CD4-positive, alpha-beta T cell (primary cell): ENCODE measurements at regions of chr9 and their contacts with region 1.

Region 1: GRCh38 chr9:127715394-127716337 is at the starts of genes PTRH1 and TTC16:
- DNase-seq: peak; percentile 92 to 98 (median 96)
- ATAC-seq: peak; percentile 94
- H3K4me3 ChIP-seq: peak within 1 kb of the TSS; percentile 73
- H3K4me3 Mint-ChIP-seq: peak within 1 kb of the TSS; percentile 92
- H3K27ac ChIP-seq: peak within 1 kb of the TSS; percentile 51 to 76
- H3K27ac Mint-ChIP-seq: peak within 1 kb of the TSS; percentile 83
- H3K4me1 ChIP-seq: peaks cover 59% of the 10 kb centered on the region
- H3K4me1 Mint-ChIP-seq: peaks cover 30% of the 10 kb centered on the region
- H3K27me3 ChIP-seq: no peaks in the 10 kb centered on the region
- H3K27me3 Mint-ChIP-seq: no peaks in the 10 kb centered on the region
- CTCF ChIP-seq: no peak
- total RNA-seq, gene PTRH1: 4.5 to 5.9 TPM
- total RNA-seq, gene TTC16: 1.6 to 2.1 TPM

Region 2: GRCh38 chr9:127611899-127612790 is 103.5 kb before region 1 on chr9 and contains the start of gene STXBP1:
- CTCF ChIA-PET with region 1: no interaction called
- POLR2A ChIA-PET with region 1: interaction called, 4 read pairs
- intact Hi-C with region 1: loop called (anchors 5 to 10 kb)
- DNase-seq: peak; percentile 66 to 93 (median 84)
- ATAC-seq: peak; percentile 76
- H3K4me3 ChIP-seq: peak within 1 kb of the TSS; percentile 57
- H3K4me3 Mint-ChIP-seq: peak within 1 kb of the TSS; percentile 99
- H3K27ac ChIP-seq: no peak within 1 kb of the TSS
- H3K27ac Mint-ChIP-seq: peak within 1 kb of the TSS; percentile 45
- H3K4me1 ChIP-seq: peaks cover 35% of the 10 kb centered on the region
- H3K4me1 Mint-ChIP-seq: peaks cover 32% of the 10 kb centered on the region
- H3K27me3 ChIP-seq: peaks cover 0 to 8% of the 10 kb centered on the region in 2 experiments
- H3K27me3 Mint-ChIP-seq: peaks cover 47% of the 10 kb centered on the region
- CTCF ChIP-seq: no peak
- total RNA-seq, gene STXBP1: 1.9 to 3.4 TPM

Region 3: DNA sequence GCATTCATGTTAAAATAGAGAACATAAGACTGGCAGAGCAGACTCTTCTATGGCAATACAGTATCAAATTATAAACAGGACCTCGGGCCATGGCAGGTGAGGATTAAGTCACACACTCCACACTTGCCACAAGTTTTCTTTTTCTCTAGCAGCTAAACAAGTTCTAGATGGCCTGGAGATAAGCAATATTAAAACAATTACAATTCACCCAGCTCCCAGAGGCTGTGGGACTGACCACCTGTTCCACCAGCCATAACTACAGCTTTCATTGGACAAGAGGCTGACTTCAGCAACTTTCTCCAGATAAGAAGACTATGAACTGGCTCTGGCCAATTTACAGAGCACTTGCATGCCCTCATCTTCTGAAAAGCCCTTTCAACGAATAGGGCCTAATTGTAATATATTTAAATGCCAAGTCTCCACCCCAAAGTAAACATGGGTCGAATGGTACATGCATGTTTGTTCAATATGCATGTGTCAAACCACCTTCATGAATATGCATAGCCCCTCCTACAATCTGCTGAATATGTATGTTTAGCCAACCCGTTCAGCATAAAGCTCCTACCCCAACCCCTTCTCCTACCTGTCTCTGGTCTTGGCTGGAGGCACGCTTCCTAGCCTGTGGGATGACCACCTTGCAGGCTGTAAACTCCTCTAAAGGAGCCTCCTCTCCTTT is 14.9 kb before region 1 on chr9:
- CTCF ChIA-PET with region 1: no interaction called
- POLR2A ChIA-PET with region 1: no interaction called
- intact Hi-C with region 1: loop called in 1 of 2 experiments (anchors 1 kb)
- DNase-seq: no peak
- ATAC-seq: no peak
- H3K4me3 ChIP-seq: no peak overlapping the region
- H3K4me3 Mint-ChIP-seq: peak overlapping the region; percentile 12
- H3K27ac ChIP-seq: no peak overlapping the region
- H3K27ac Mint-ChIP-seq: no peak overlapping the region
- H3K4me1 ChIP-seq: peaks cover 13% of the 10 kb centered on the region
- H3K4me1 Mint-ChIP-seq: peaks cover 12% of the 10 kb centered on the region
- H3K27me3 ChIP-seq: no peaks in the 10 kb centered on the region
- H3K27me3 Mint-ChIP-seq: no peaks in the 10 kb centered on the region
- CTCF ChIP-seq: no peak